H1 (cell line): ENCODE measurements at regions of chr3 and their contacts with region 1.

Region 1: GRCh38 chr3:112321867-112322649 is 10.9 kb upstream of the CD200 start:
- DNase-seq: no peak
- H3K4me3 ChIP-seq: peak overlapping the region in 1 of 4 experiments; percentile 28; a peak in 1 of 8 replicates
- H3K27ac ChIP-seq: peak overlapping the region; percentile 25; the same call in 1 of the 2 replicates
- H3K4me1 ChIP-seq: peaks cover 0 to 16% (median 8%) of the 10 kb centered on the region in 4 experiments; a peak in 5 of 7 replicates
- H3K27me3 ChIP-seq: no peaks in the 10 kb centered on the region
- CTCF ChIP-seq: no peak
- EP300 ChIP-seq: no peak
- POLR2A ChIP-seq: no peak
- RAD21 ChIP-seq: no peak

Region 2: GRCh38 chr3:112303764-112304325 is 18.2 kb before region 1 on chr3:
- CTCF ChIA-PET with region 1: interaction called, 9 read pairs
- POLR2A ChIA-PET with region 1: interaction called, 16 read pairs
- DNase-seq: peak in 1 of 2 experiments; percentile 51
- H3K4me3 ChIP-seq: peak overlapping the region; percentile 29 to 53 (median 37)
- H3K27ac ChIP-seq: peak overlapping the region; percentile 80
- H3K4me1 ChIP-seq: peaks cover 20 to 27% (median 22%) of the 10 kb centered on the region in 4 experiments
- H3K27me3 ChIP-seq: no peaks in the 10 kb centered on the region
- CTCF ChIP-seq: no peak
- EP300 ChIP-seq: no peak
- POLR2A ChIP-seq: no peak
- RAD21 ChIP-seq: no peak